Naive thymus-derived CD4-positive, alpha-beta T cell (primary cell): ENCODE measurements at regions of chr11 and their contacts with region 1.

Region 1: DNA sequence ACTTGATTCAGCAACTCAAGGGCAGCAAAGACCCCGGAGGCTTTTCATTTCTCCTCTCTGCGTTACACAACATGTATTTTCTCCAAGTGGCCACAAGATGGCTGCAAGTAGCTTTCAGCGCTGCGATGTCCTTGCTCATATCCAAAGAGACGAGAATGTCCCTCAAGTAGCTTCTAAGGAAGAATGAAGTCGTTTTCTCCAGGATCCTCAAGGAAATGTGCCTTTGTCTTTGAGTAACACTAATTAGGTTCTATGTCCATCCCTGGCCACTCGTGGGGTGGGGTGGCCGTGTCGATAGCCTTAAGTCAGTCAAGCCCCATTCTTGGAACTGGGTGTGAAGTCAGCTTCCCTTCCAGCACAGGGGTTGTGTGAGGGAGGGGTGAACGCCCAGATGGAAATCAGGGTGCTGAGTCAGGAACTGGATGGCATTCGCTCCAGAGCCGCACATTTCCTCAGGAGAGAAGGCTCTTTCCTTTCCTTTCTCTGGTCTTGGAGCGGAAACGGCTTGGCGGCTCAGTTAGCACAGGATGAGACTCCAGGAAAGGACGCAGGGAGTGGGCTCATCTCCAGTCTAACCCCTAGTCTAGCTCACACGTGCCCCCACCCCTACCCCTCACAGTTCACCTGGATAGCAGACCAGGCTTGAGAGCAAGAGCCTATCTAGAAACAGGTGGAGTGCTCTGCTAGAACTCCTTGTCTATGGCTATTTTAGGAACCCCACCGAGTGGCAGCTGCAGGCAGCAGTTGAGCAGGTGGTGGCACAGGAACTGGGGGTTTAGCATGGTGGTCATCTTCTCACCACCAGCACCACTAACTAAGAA is 44.3 kb downstream of the NNMT start:
- DNase-seq: peak in 7 of 9 donors; percentile 15 to 47 (median 39)
- ATAC-seq: peak; percentile 83
- H3K4me3 ChIP-seq: peak overlapping the region; percentile 59
- H3K4me3 Mint-ChIP-seq: peak overlapping the region; percentile 52 to 83 (median 71)
- H3K27ac ChIP-seq: no peak overlapping the region
- H3K27ac Mint-ChIP-seq: peak overlapping the region in 3 of 9 donors; percentile 15 to 65 (median 17)
- H3K4me1 ChIP-seq: peaks cover 0 to 9% of the 10 kb centered on the region in 2 donors
- H3K4me1 Mint-ChIP-seq: peaks cover 5 to 15% (median 12%) of the 10 kb centered on the region in 7 donors
- H3K27me3 ChIP-seq: no peaks in the 10 kb centered on the region
- H3K27me3 Mint-ChIP-seq: peaks cover 0 to 30% (median 0%) of the 10 kb centered on the region in 5 donors

Region 2: DNA sequence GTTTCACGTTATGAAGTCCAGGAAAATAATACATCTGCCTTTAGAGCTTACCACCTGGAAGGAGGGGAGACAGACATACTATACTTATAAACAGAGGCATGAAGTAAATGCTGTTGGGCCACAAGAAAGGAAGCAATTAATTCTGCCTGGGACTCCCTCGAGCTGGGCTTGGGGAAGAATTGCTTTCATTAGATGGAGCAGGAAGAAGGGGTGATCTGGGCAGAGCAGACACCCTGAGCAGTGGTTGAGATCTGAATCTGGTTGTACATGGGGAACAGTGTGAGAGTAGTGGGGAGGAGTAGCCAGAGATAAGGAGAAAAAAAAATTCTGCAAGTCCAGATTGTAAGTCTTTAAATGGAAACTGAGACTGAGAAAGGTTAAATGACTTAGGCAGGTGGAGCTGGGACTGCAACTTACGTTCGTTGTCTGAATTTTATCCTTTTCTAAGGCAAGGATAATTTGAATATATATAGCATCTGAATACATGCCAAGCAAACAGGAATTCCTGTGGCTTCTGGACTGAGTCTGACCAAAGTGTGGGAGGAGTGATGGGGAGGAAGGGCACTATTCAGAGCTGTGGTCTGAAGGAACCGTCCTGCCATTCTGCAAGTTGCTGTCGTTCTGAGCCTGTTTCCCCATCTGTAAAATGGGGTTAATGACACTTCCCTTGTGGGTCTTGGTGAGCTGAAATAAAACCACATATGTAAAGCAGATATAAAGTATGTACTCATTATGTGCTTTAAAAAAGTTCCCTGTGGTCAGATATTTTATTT is 1371.4 kb before region 1 on chr11:
- CTCF ChIA-PET with region 1: no interaction called
- POLR2A ChIA-PET with region 1: no interaction called
- intact Hi-C with region 1: no loop called
- DNase-seq: no peak
- ATAC-seq: no peak
- H3K4me3 ChIP-seq: no peak overlapping the region
- H3K4me3 Mint-ChIP-seq: no peak overlapping the region
- H3K27ac ChIP-seq: no peak overlapping the region
- H3K27ac Mint-ChIP-seq: no peak overlapping the region
- H3K4me1 ChIP-seq: no peaks in the 10 kb centered on the region
- H3K4me1 Mint-ChIP-seq: peaks cover 0 to 9% (median 0%) of the 10 kb centered on the region in 7 donors
- H3K27me3 ChIP-seq: no peaks in the 10 kb centered on the region
- H3K27me3 Mint-ChIP-seq: peaks cover 27 to 35% (median 32%) of the 10 kb centered on the region in 5 donors

Region 3: GRCh38 chr11:114280696-114281095 is 59.8 kb before region 1 on chr11:
- CTCF ChIA-PET with region 1: interaction called, 3 read pairs
- POLR2A ChIA-PET with region 1: no interaction called
- intact Hi-C with region 1: loop called in 1 of 2 experiments (anchors 1 kb)
- DNase-seq: peak in 5 of 9 donors; percentile 24 to 39 (median 26)
- ATAC-seq: no peak
- H3K4me3 ChIP-seq: no peak overlapping the region
- H3K4me3 Mint-ChIP-seq: no peak overlapping the region
- H3K27ac ChIP-seq: no peak overlapping the region
- H3K27ac Mint-ChIP-seq: peak overlapping the region in 1 of 9 donors; percentile 56
- H3K4me1 ChIP-seq: no peaks in the 10 kb centered on the region
- H3K4me1 Mint-ChIP-seq: no peaks in the 10 kb centered on the region
- H3K27me3 ChIP-seq: no peaks in the 10 kb centered on the region
- H3K27me3 Mint-ChIP-seq: peaks cover 5 to 34% (median 18%) of the 10 kb centered on the region in 5 donors

Region 4: DNA sequence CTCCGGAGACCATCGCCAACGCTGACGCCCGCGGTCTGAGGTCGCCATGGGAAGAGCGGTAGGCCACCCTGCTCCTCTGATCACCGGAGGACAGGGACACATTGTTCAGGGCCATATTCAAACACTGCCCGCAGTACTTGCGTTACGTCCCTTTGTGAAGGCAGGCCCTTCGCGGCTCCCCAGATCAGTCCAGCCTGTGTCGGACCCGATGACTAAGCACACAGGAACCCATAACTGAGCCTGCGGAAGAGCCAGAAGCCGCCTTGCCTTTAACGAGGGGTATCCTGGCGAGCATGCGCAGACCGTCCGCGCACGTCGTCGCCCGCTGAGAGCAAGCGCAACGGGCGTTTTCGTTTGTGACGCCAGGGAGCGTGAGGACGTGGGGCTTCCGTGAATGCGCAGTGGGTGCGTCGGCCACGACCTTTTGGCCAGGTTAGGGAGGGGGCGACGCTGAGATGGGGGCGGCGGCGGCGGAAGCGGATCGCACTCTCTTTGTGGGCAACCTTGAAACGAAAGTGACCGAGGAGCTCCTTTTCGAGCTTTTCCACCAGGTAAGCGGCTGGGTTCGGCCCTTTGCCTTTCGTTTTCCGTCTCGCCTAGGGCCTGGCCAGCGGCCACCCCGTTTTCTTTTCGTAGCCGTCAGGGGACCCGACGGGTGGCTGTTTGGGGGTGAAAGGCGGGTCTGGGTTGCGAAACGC is 59.8 kb after region 1 on chr11 and contains the starts of genes C11orf71 and RBM7:
- CTCF ChIA-PET with region 1: no interaction called
- POLR2A ChIA-PET with region 1: no interaction called
- intact Hi-C with region 1: loop called (anchors 2 kb)
- DNase-seq: peak; percentile 94 to 97 (median 95)
- ATAC-seq: peak; percentile 96
- H3K4me3 ChIP-seq: peak within 1 kb of the TSS; percentile 93
- H3K4me3 Mint-ChIP-seq: peak within 1 kb of the TSS; percentile 89 to 99 (median 97)
- H3K27ac ChIP-seq: peak within 1 kb of the TSS; percentile 96
- H3K27ac Mint-ChIP-seq: peak within 1 kb of the TSS; percentile 96 to 100 (median 99)
- H3K4me1 ChIP-seq: peaks cover 25% of the 10 kb centered on the region in 2 donors
- H3K4me1 Mint-ChIP-seq: peaks cover 33 to 77% (median 68%) of the 10 kb centered on the region in 7 donors
- H3K27me3 ChIP-seq: no peaks in the 10 kb centered on the region
- H3K27me3 Mint-ChIP-seq: no peaks in the 10 kb centered on the region
- total RNA-seq, gene C11orf71: 6.0 to 19.1 (median 17.1) TPM
- total RNA-seq, gene RBM7: 35.8 to 71.3 (median 43.4) TPM

Region 5: GRCh38 chr11:114606003-114606801 is 265.7 kb after region 1 on chr11:
- CTCF ChIA-PET with region 1: no interaction called
- POLR2A ChIA-PET with region 1: no interaction called
- intact Hi-C with region 1: loop called in 1 of 2 experiments (anchors 10 kb)
- DNase-seq: no peak
- ATAC-seq: no peak
- H3K4me3 ChIP-seq: no peak overlapping the region
- H3K4me3 Mint-ChIP-seq: no peak overlapping the region
- H3K27ac ChIP-seq: no peak overlapping the region
- H3K27ac Mint-ChIP-seq: no peak overlapping the region
- H3K4me1 ChIP-seq: no peaks in the 10 kb centered on the region
- H3K4me1 Mint-ChIP-seq: no peaks in the 10 kb centered on the region
- H3K27me3 ChIP-seq: no peaks in the 10 kb centered on the region
- H3K27me3 Mint-ChIP-seq: no peaks in the 10 kb centered on the region

Region 6: GRCh38 chr11:114953039-114953438 is 612.5 kb after region 1 on chr11:
- CTCF ChIA-PET with region 1: no interaction called
- POLR2A ChIA-PET with region 1: no interaction called
- intact Hi-C with region 1: loop called in 1 of 2 experiments (anchors 2 kb)
- DNase-seq: no peak
- ATAC-seq: no peak
- H3K4me3 ChIP-seq: no peak overlapping the region
- H3K4me3 Mint-ChIP-seq: no peak overlapping the region
- H3K27ac ChIP-seq: no peak overlapping the region
- H3K27ac Mint-ChIP-seq: no peak overlapping the region
- H3K4me1 ChIP-seq: no peaks in the 10 kb centered on the region
- H3K4me1 Mint-ChIP-seq: peaks cover 0 to 1% (median 0%) of the 10 kb centered on the region in 7 donors
- H3K27me3 ChIP-seq: no peaks in the 10 kb centered on the region
- H3K27me3 Mint-ChIP-seq: peaks cover 0 to 30% (median 20%) of the 10 kb centered on the region in 5 donors